ENCODE measurements at regions of chr12 and their contacts with region 1.

Region 1: GRCh38 chr12:54379401-54380201 is 4.9 kb downstream of the ZNF385A start:
- DNase-seq: peak; percentile 92
- H3K4me3 ChIP-seq: peak overlapping the region; percentile 30 to 52
- H3K27ac ChIP-seq: peak overlapping the region; percentile 64 to 72
- H3K4me1 ChIP-seq: peaks cover 0 to 4% of the 10 kb centered on the region in 2 donors
- H3K27me3 ChIP-seq: no peaks in the 10 kb centered on the region
- CTCF ChIP-seq: peak; percentile 100
- POLR2A ChIP-seq: peak in 1 of 2 donors; percentile 39

Region 2: GRCh38 chr12:54214553-54215406 is 164.8 kb before region 1 on chr12:
- intact Hi-C with region 1: loop called (anchors 10 kb)
- DNase-seq: peak; percentile 72 to 88
- H3K4me3 ChIP-seq: no peak overlapping the region
- H3K27ac ChIP-seq: no peak overlapping the region
- H3K4me1 ChIP-seq: peaks cover 0 to 11% of the 10 kb centered on the region in 2 donors
- H3K27me3 ChIP-seq: peaks cover 0 to 13% of the 10 kb centered on the region in 2 donors
- CTCF ChIP-seq: peak; percentile 68 to 87 (median 80)
- POLR2A ChIP-seq: peak in 1 of 2 donors; percentile 19

Measured in uterus (tissue), 4 donors.